Activated T-helper 2 cell treated with anti-CD3 and anti-CD28 coated beads, Interferon-gamma antibody, Interleukin-2, Interleukin-4, amounts not matched to agents 10 μg/mL and 5 μg/mL and 100 μg/mL, durations not matched to agents 14 hours and 24 hours and 36 hours (primary cell): ENCODE measurements at regions of chr10 and their contacts with region 1.

Region 1: DNA sequence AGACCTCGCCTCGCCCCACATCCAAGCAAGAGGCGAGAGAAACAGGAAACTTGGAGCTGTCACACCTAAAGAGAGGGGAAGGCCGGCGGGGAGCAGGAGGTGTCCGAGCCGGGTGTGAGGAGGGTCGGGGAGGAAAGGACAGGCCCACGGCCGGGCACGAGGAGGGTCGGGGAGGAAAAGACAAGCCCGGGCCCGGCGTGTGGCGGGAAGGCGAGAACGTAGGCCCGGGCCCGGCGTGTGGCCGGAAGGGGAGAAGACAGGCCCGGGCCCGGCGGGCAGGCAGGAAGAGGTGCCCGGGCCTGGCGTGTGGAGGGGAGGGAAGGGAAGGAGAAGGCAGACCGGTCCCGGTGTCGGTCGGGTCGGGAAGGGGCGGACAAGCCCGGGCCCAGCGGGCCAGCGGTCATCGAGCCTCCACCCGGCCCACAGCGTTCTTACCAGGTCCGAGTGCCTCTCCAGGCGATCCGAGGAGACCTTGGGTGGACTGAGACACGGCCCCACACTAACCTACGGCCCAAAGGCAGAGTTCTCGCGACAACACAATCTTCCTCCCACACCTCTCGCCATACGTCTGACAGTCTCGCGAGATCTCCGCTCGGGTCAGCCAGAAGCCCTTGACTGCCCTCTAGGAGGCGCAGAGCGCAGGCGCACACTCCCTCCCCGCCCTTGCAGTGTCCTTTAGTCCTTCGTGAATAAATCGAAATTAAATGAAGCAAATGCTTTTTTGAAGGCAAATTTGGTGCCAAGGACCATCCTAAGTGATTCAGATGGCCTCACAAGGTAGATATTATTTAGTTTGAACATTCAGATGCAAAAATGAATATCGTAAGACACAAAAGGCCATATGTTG is at the start of gene NCOA4:
- DNase-seq: peak; percentile 96
- H3K4me3 Mint-ChIP-seq: peak within 1 kb of the TSS; percentile 97
- H3K27ac Mint-ChIP-seq: peak within 1 kb of the TSS; percentile 93
- H3K4me1 Mint-ChIP-seq: peaks cover 40% of the 10 kb centered on the region
- H3K27me3 Mint-ChIP-seq: peaks cover under 1% of the 10 kb centered on the region
- total RNA-seq, gene NCOA4: 98.7 and 103 TPM in 2 replicates

Region 2: GRCh38 chr10:45249978-45250693 is 780.2 kb before region 1 on chr10:
- intact Hi-C with region 1: loop called (anchors 2 kb)
- DNase-seq: no peak
- H3K4me3 Mint-ChIP-seq: peak overlapping the region; percentile 34
- H3K27ac Mint-ChIP-seq: no peak overlapping the region
- H3K4me1 Mint-ChIP-seq: peaks cover 4% of the 10 kb centered on the region
- H3K27me3 Mint-ChIP-seq: peaks cover 20% of the 10 kb centered on the region

Region 3: GRCh38 chr10:45594276-45595106 is 435.8 kb before region 1 on chr10:
- intact Hi-C with region 1: loop called (anchors 5 kb)
- DNase-seq: peak; percentile 88
- H3K4me3 Mint-ChIP-seq: peak overlapping the region; percentile 85
- H3K27ac Mint-ChIP-seq: peak overlapping the region; percentile 62
- H3K4me1 Mint-ChIP-seq: peaks cover 24% of the 10 kb centered on the region
- H3K27me3 Mint-ChIP-seq: peaks cover 10% of the 10 kb centered on the region

Region 4: DNA sequence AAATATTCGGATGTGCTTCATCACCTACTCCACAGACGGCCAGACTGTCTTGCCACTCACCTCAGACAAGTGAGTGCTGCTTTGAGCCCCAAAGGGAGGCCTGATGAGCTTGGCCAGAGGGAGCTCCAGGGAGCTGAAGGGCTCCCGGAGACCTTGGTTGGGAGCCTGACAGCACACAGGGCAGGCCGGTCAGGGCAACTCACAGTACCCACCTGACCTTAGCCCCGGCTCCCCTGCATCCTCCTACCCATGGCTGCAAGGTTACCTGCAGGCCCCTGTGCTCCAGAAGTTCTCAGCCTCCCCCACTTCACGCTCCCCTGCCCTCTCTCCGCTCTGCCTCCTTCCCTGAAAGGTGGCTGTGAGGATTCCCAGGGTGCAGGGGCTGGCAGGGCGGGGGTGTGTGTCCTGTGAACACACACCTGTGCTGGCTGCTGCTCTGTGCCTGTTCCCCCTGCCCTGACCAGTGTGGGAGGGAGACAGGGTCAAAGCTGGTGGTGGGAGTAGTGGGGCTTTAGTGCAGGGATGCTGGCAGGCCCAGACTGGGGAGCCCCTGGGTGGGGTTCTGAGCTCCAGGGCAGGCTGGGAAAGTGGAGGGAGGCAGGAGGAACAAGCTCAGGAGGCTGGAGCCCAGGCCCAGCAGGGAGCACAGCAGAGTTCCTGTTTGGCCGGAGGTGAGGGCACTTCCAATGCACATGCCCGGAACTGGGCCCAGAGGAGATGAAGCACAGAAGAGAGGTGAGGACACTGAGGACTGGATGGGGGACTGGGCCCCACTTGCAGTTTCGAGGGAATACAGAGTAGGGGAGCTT is 263.7 kb after region 1 on chr10:
- intact Hi-C with region 1: no loop called
- DNase-seq: no peak
- H3K4me3 Mint-ChIP-seq: no peak overlapping the region
- H3K27ac Mint-ChIP-seq: no peak overlapping the region
- H3K4me1 Mint-ChIP-seq: peaks cover 15% of the 10 kb centered on the region
- H3K27me3 Mint-ChIP-seq: no peaks in the 10 kb centered on the region